Esophagus muscularis mucosa (tissue), 4 donors: ENCODE measurements at regions of chr1 and their contacts with region 1.

Region 1: GRCh38 chr1:241847796-241848685 is at the start of gene EXO1:
- DNase-seq: peak; percentile 95
- H3K4me3 ChIP-seq: peak within 1 kb of the TSS; percentile 72 to 97 (median 78)
- H3K27ac ChIP-seq: peak within 1 kb of the TSS; percentile 93 to 99 (median 96)
- H3K4me1 ChIP-seq: peaks cover 8 to 14% (median 11%) of the 10 kb centered on the region in 4 donors
- H3K27me3 ChIP-seq: no peaks in the 10 kb centered on the region
- CTCF ChIP-seq: peak; percentile 25 to 45 (median 29)
- EP300 ChIP-seq: no peak
- POLR2A ChIP-seq: no peak
- total RNA-seq, gene EXO1: 0.46 to 1.5 (median 1.4) TPM in 3 of 4 donors, not detected in the other

Region 2: DNA sequence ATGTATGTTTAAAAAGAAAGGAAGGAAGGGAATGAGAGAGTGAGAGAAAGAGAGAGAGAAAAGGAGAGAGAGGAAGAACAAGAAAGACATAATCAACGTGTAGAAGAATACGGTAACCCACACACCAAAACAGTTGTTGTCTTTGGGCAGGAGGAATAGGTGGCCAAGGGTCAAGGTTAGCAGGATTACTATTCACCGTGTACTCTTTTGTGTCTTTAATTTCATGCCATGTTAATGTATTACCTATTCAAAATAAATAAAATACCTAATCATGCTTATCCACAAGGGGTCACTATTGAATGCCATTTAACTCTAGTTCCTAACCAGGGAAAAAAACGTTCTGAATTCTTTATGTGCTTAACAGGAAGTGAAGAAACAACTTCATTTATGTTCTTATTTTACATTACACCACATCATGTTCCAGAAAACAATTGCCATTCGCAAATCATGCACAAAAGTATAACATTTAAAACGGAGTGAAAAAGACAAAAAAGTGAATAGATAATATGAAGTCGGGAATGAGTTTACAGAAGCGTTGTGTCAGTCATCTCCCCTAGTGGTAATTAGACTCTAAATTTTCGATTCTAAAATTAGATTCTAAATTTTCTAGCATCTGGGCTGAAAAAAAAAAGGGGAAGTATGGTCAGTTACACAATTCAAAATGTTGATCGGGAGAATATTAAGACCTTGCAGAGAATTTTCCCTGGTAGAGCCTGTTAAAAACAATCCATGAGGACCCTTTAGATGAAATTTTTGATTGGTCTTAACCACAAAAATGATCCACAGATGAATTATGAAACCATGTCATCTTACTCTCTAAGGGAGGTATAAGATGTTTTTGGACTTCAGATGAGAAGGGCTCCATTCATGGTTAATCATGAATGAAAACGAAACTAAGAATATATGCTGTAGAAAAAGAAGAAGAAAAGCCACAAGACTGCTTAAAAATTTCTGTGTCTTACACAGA is 316.6 kb before region 1 on chr1:
- intact Hi-C with region 1: loop called (anchors 10 kb)
- DNase-seq: no peak
- H3K4me3 ChIP-seq: peak overlapping the region; percentile 41 to 51 (median 49)
- H3K27ac ChIP-seq: peak overlapping the region in 1 of 4 donors; percentile 16
- H3K4me1 ChIP-seq: peaks cover 0 to 3% (median 0%) of the 10 kb centered on the region in 4 donors
- H3K27me3 ChIP-seq: peaks cover 0 to 12% (median 0%) of the 10 kb centered on the region in 4 donors
- CTCF ChIP-seq: peak; percentile 38 to 53 (median 48)
- EP300 ChIP-seq: no peak
- POLR2A ChIP-seq: no peak

Region 3: GRCh38 chr1:241592273-241592958 is 255.6 kb before region 1 on chr1:
- intact Hi-C with region 1: no loop called
- DNase-seq: no peak
- H3K4me3 ChIP-seq: no peak overlapping the region
- H3K27ac ChIP-seq: no peak overlapping the region
- H3K4me1 ChIP-seq: no peaks in the 10 kb centered on the region
- H3K27me3 ChIP-seq: no peaks in the 10 kb centered on the region
- CTCF ChIP-seq: no peak
- EP300 ChIP-seq: no peak
- POLR2A ChIP-seq: no peak

Region 4: DNA sequence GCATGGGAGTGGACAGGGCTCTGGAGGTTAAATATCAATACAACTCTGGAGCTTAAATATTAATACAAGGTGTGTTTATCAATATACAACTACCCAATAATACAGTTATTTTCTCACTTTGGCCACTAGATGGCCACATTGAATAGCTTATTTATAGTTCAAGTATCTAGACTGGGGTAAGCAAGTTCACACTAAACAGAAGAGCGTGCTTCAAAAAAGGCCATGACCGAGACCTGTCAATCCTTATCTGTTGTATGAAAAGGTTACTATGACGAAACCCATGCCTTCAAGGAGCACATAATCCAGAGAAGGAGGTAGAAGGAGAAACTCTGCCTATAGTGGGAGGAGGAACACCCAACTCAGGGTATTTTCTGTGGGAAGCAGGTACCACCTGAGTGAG is 237.0 kb before region 1 on chr1:
- intact Hi-C with region 1: loop called (anchors 10 kb)
- DNase-seq: no peak
- H3K4me3 ChIP-seq: no peak overlapping the region
- H3K27ac ChIP-seq: no peak overlapping the region
- H3K4me1 ChIP-seq: peaks cover 0 to 4% (median 0%) of the 10 kb centered on the region in 4 donors
- H3K27me3 ChIP-seq: peaks cover 0 to 6% (median 0%) of the 10 kb centered on the region in 4 donors
- CTCF ChIP-seq: peak; percentile 66 to 71 (median 68)
- EP300 ChIP-seq: no peak
- POLR2A ChIP-seq: no peak

Region 5: DNA sequence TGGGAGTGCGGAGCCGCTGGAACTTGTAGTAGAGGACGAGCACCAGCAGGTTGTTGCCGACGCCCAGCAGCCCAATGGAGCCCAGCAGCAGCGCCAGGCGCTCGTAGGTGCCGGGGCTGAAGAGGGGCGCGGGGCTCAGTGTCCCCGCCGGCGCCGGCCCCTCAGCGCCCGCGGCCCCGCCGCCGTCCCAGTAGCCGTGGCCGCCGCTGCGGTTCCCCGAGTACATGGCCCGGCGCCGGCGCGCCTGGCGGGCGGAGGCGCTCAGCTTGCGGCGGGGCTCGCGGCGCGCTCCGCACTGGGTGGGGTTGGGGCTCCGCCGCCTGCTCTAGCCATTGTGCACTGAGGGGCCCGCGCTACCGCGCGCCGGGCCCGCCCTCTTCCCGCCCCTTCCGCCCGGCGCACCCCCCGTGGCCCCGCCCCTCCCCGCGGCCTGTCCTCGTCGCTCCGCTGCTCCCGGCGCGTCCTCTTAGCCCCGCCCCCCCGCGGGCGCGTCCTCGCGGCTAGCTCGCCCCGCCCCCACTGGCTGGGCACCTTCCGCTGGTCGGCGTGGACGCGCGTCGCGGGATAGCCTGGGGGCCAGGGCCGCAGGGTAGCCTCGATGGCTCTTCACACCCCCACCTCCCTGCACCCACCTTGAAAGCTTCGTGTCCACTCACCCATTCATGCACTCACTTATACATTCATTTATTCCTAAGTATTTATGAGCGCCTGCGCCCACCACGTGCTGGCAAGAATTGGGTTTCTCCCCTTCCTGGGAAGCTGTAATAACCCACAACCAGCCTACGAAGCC is 207.8 kb before region 1 on chr1 and contains the starts of genes CHML and OPN3:
- intact Hi-C with region 1: loop called (anchors 10 kb)
- DNase-seq: peak; percentile 96
- H3K4me3 ChIP-seq: peak within 1 kb of the TSS; percentile 81 to 93 (median 91)
- H3K27ac ChIP-seq: peak within 1 kb of the TSS; percentile 82 to 87 (median 84)
- H3K4me1 ChIP-seq: peaks cover 3 to 37% (median 31%) of the 10 kb centered on the region in 4 donors
- H3K27me3 ChIP-seq: no peaks in the 10 kb centered on the region
- CTCF ChIP-seq: peak in 1 of 3 experiments; percentile 17
- EP300 ChIP-seq: no peak
- POLR2A ChIP-seq: no peak
- total RNA-seq, gene CHML: 4.6 to 8.2 (median 5.0) TPM
- total RNA-seq, gene OPN3: 5.3 to 12.4 (median 8.0) TPM

Region 6: DNA sequence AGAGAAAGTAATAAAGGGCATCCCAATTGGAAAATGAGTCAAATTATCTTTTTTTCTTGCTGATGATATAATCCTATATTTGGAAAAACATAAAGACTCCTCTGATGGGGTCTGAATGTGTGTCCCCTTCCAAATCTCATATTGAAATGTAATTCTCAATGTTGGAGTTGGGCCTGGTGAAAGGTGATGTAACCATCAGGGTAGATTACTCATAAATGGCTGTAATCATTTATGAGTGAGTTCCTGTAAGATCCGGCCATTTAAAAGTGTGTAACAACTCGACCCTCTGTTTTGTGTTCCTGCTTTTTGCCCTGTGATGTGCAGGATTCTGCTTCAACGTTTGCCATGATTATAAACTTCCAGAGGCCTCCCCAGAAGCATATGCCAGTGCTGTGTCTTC is 195.1 kb after region 1 on chr1:
- intact Hi-C with region 1: no loop called
- DNase-seq: peak; percentile 57
- H3K4me3 ChIP-seq: no peak overlapping the region
- H3K27ac ChIP-seq: no peak overlapping the region
- H3K4me1 ChIP-seq: no peaks in the 10 kb centered on the region
- H3K27me3 ChIP-seq: no peaks in the 10 kb centered on the region
- CTCF ChIP-seq: no peak
- EP300 ChIP-seq: no peak
- POLR2A ChIP-seq: no peak